Activated CD4-positive, alpha-beta T cell treated with anti-CD3 and anti-CD28 coated beads for 36 hours (primary cell): ENCODE measurements at regions of chr14 and their contacts with region 1.

Region 1: GRCh38 chr14:90256354-90257131 is at the start of gene PSMC1:
- DNase-seq: peak; percentile 94
- ATAC-seq: peak; percentile 97
- H3K4me3 Mint-ChIP-seq: peak within 1 kb of the TSS; percentile 99
- H3K27ac Mint-ChIP-seq: peak within 1 kb of the TSS; percentile 97
- H3K4me1 Mint-ChIP-seq: peaks cover 26% of the 10 kb centered on the region
- H3K27me3 Mint-ChIP-seq: no peaks in the 10 kb centered on the region
- total RNA-seq, gene PSMC1: 77.3 to 127 TPM

Region 2: DNA sequence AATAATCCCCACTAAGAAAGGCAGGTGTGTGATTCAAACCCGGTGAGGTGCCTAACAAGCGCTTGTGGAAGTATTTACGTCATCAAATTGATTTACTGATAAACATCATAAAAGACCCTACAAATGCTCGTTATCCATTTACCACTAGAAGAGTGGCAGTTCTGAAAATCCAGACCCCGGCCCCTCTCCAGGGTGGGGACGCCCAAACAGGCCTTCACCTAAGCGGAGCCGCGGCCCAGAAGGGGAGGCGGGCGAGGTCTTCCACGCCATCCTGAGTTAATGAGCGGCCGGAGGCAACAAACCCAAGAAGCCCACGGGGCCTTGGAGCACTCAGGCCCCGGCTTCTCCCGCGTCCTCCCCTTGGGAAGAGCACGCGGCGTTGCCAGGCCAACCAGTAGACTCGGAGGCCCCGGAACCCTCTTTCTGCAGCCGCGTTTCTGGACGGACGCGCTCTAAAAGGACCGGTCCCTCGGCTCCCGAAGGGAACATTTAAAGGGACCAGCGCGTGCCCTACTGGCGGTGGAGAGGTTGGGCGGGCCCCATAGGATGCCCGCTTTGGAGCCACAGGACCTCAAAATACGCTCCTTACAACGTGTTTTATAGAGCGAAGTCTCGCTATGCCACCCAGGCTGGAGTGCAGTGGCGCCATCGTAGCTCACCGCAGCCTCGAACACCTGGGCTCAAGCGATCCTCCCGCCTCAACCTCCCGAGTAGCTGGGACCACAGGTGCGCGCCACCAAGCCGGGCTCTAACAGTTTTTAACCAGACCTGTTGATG is 1705.3 kb before region 1 on chr14:
- CTCF ChIA-PET with region 1: no interaction called
- POLR2A ChIA-PET with region 1: no interaction called
- intact Hi-C with region 1: loop called in 1 of 2 experiments (anchors 10 kb)
- DNase-seq: peak; percentile 71
- ATAC-seq: peak; percentile 70
- H3K4me3 Mint-ChIP-seq: peak overlapping the region; percentile 63
- H3K27ac Mint-ChIP-seq: no peak overlapping the region
- H3K4me1 Mint-ChIP-seq: peaks cover 13% of the 10 kb centered on the region
- H3K27me3 Mint-ChIP-seq: peaks cover 37% of the 10 kb centered on the region

Region 3: DNA sequence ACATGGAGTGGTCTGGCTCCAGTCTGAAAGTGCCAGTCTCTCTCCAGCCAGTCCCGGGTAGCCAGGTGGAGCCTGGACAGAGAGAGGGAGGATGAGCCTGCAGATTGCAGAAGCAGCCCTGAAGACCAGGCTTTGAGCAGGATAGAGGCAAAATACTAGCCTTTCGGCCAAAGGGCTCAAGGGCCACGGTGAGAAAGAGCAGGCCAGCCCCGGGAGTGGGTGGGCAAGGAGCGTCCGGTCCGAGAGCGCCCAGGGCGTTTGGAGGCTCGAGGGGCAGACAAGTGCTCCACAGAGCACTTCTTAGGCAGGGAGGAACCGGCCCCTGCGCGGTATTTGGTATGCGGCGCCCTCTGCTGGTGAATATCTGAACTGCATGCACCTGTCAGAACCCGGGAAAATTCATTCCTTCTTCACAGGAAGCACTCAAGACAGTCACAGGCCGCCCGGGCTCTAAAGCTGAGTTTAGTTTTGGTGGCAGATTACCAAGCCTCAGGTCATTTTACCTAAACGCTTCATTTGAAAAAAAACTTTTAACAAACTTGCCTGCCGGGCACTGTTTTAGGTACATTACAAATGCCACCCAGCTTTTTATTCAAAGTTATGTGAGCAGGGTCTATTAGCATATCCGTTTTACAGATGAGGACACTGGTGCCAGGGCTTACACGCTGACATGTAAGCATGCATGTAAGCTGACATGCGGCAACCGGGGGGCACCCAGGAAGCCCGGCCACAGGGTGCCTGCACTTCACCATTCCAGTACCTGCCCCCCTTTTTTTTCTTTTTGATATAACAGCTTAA is 21.2 kb before region 1 on chr14:
- CTCF ChIA-PET with region 1: interaction called, 10 read pairs
- POLR2A ChIA-PET with region 1: no interaction called
- intact Hi-C with region 1: no loop called
- DNase-seq: peak; percentile 82
- ATAC-seq: peak; percentile 61
- H3K4me3 Mint-ChIP-seq: no peak overlapping the region
- H3K27ac Mint-ChIP-seq: no peak overlapping the region
- H3K4me1 Mint-ChIP-seq: no peaks in the 10 kb centered on the region
- H3K27me3 Mint-ChIP-seq: peaks cover 7% of the 10 kb centered on the region

Region 4: GRCh38 chr14:90274808-90275457 is 18.4 kb after region 1 on chr14:
- CTCF ChIA-PET with region 1: interaction called, 3 read pairs
- POLR2A ChIA-PET with region 1: interaction called, 6 read pairs
- intact Hi-C with region 1: loop called (anchors 2 kb)
- DNase-seq: peak; percentile 62
- ATAC-seq: peak; percentile 85
- H3K4me3 Mint-ChIP-seq: no peak overlapping the region
- H3K27ac Mint-ChIP-seq: peak overlapping the region; percentile 95
- H3K4me1 Mint-ChIP-seq: peaks cover 25% of the 10 kb centered on the region
- H3K27me3 Mint-ChIP-seq: no peaks in the 10 kb centered on the region

Region 5: DNA sequence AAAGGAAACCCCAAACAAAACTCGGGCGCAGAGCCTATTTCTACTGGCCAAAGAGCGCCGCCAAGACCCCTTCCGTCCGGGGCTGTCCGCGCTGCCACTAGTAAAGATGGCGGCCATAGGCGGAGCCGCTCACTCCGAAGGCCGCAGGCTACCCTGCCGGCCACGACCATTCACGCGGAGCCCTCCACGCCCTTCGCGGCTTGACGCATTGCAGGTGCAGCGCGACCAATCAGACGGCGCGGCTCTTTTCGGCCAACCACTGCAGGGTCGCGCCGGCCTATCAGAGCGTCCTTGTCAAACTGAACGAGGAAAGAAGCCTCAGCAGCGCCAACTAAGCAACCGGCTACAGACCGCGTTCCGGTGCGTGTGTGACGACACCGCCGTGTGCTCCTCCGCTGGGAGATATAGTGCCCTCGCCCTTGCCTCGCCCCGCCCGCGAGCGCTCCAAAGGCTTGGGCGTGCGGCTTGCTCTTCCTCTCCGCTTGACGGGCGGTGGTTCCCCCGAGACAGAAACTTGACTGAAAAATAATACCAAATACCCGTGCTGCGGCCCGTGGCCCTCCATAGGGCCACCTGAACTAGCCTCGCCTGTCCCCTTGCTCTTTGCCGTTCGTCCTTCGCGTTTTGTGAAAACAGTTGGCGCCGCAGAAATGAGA is 126.7 kb after region 1 on chr14:
- CTCF ChIA-PET with region 1: interaction called, 3 read pairs
- POLR2A ChIA-PET with region 1: no interaction called
- intact Hi-C with region 1: loop called (anchors 1 to 5 kb)
- DNase-seq: peak; percentile 99
- ATAC-seq: peak; percentile 89
- H3K4me3 Mint-ChIP-seq: no peak overlapping the region
- H3K27ac Mint-ChIP-seq: no peak overlapping the region
- H3K4me1 Mint-ChIP-seq: peaks cover 27% of the 10 kb centered on the region
- H3K27me3 Mint-ChIP-seq: no peaks in the 10 kb centered on the region